Posterior vena cava (tissue), 2 donors: ENCODE measurements at regions of chr12 and their contacts with region 1.

Region 1: GRCh38 chr12:131466932-131467331 is 244.0 kb upstream of the SFSWAP start:
- DNase-seq: no peak

Region 2: GRCh38 chr12:131420867-131421447 is 46.0 kb before region 1 on chr12:
- intact Hi-C with region 1: loop called in 1 of 2 experiments (anchors 1 kb)
- DNase-seq: no peak